Activated CD4-positive, alpha-beta memory T cell treated with anti-CD3 and anti-CD28 coated beads for 36 hours (primary cell): ENCODE measurements at regions of chr10 and their contacts with region 1.

Region 1: DNA sequence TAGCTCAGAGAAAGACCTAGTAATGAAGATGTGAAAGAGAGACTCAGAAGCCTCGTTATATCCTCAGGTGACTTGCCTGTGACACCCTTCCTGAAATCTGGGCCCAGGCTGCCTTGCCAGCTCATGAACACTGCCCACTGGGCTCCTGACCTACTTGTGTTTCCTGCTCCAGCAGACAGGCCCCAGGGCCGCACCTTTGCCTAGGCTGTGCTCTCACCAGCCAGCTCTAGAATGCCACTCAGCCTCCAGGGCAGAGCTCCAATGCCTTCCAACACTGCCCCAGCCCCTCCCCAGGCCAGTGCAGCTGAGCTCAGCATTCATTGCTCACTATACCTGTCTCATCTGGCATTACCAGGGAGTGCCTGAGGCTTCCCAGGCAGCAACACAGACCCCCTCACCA is 94.3 kb downstream of the DLG5 start:
- DNase-seq: peak; percentile 49
- H3K4me3 Mint-ChIP-seq: no peak overlapping the region
- H3K27ac Mint-ChIP-seq: no peak overlapping the region
- H3K4me1 Mint-ChIP-seq: peaks cover 22% of the 10 kb centered on the region
- H3K27me3 Mint-ChIP-seq: no peaks in the 10 kb centered on the region

Region 2: DNA sequence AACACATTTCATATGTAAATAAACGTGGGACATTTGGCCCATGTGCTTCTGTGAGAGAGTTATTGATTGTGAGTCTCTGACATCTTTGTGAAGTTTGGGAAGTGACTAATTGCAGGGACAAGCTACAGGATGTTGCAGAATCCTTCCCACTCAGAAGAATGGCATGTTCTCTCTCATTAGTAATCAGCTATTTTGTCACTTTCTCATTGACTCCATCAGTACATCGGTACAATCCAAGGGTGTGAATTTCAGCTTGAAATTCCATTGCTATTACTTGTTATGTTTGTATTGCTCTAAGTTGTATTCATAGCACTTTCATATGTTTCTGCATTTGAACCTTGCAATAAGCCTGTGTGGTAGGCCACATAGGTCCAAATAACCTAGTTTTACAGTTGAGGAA is 94.6 kb before region 1 on chr10:
- CTCF ChIA-PET with region 1: no interaction called
- POLR2A ChIA-PET with region 1: no interaction called
- intact Hi-C with region 1: no loop called
- DNase-seq: no peak
- H3K4me3 Mint-ChIP-seq: no peak overlapping the region
- H3K27ac Mint-ChIP-seq: no peak overlapping the region
- H3K4me1 Mint-ChIP-seq: no peaks in the 10 kb centered on the region
- H3K27me3 Mint-ChIP-seq: peaks cover 3% of the 10 kb centered on the region

Region 3: GRCh38 chr10:77801474-77802161 is 30.6 kb before region 1 on chr10:
- CTCF ChIA-PET with region 1: no interaction called
- POLR2A ChIA-PET with region 1: no interaction called
- intact Hi-C with region 1: loop called (anchors 1 kb)
- DNase-seq: peak; percentile 79
- H3K4me3 Mint-ChIP-seq: no peak overlapping the region
- H3K27ac Mint-ChIP-seq: peak overlapping the region; percentile 46
- H3K4me1 Mint-ChIP-seq: peaks cover 18% of the 10 kb centered on the region
- H3K27me3 Mint-ChIP-seq: no peaks in the 10 kb centered on the region